ENCODE measurements at regions of chr10 and their contacts with region 1.

Region 1: DNA sequence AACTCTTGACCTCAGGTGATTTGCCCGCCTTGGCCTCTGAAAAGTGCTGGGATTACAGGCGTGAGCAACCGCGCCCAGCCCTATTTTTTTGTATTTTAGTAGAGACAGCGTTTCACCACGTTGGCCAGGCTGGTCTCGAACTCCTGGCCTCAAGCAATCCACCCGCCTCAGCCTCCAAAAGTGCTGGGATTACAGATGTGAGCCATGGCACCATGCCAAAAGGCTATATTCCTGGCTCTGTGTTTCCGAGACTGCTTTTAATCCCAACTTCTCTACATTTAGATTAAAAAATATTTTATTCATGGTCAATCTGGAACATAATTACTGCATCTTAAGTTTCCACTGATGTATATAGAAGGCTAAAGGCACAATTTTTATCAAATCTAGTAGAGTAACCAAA is 11.0 kb upstream of the ANKRD26 start:
- DNase-seq: no peak
- H3K4me3 ChIP-seq: no peak overlapping the region
- CTCF ChIP-seq: no peak

Region 2: GRCh38 chr10:27207350-27207749 is 96.1 kb after region 1 on chr10:
- in situ Hi-C with region 1: loop called (anchors 10 kb)
- DNase-seq: no peak
- H3K4me3 ChIP-seq: no peak overlapping the region
- CTCF ChIP-seq: no peak

Measured in astrocyte of the cerebellum (primary cell).